ENCODE measurements at regions of chr7 and their contacts with region 1.

Region 1: DNA sequence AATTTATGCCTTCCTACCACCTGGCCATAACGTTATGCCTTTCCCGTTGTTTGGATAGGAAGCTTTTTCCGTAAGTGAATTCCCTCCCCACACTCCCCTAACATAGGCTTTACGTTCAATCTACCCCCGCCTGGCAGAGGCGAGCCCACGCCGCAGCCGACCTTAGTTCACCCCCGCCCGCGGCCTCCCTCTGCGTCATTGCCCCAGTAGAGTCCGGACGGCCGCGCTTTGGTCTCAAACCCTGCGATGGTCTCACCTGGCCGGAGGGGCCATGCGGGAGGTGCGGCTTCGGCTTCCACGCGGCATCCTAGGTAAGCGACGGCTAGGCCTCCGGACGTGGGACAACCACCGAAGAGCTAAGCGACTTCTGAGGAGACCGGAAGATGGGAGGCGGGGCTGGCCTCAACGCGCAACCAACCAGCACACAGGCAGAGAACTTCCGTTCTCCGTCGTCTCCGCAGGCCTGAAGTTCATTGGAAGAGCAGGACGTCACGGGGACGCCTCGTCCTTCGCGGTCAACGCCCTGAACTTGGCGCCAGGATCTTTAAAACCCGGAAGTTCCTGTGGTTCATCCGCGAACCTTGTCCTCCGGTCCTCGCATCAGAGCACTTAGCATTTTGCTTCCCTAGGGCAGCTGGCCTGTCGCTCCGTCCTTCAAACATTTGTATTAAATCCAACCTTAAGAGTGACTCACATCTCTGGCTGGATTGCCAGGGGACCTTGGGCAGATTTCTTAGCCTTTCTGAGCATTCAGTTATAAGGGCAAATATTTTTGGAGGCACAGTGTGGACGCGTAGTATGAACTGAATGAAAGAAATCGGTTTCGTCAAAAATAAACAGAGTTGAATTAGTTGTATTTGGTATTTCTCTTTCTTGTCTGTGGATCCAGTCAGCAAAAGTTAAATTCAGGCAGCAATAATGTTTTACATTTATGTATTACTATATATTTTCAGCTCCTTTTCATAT is at the start of gene CHCHD2:
- DNase-seq: peak; percentile 75 to 96 (median 93)
- ATAC-seq: peak; percentile 99
- H3K4me3 ChIP-seq: peak within 1 kb of the TSS; percentile 72
- H3K4me3 Mint-ChIP-seq: peak within 1 kb of the TSS; percentile 94 to 100 (median 96)
- H3K27ac ChIP-seq: peak within 1 kb of the TSS; percentile 95
- H3K27ac Mint-ChIP-seq: peak within 1 kb of the TSS; percentile 97 to 99 (median 98)
- H3K4me1 ChIP-seq: peaks cover 18 to 20% of the 10 kb centered on the region in 2 donors
- H3K4me1 Mint-ChIP-seq: peaks cover 19 to 43% (median 33%) of the 10 kb centered on the region in 7 donors
- H3K27me3 ChIP-seq: no peaks in the 10 kb centered on the region
- H3K27me3 Mint-ChIP-seq: no peaks in the 10 kb centered on the region
- total RNA-seq, gene CHCHD2: 133 to 451 (median 179) TPM

Region 2: DNA sequence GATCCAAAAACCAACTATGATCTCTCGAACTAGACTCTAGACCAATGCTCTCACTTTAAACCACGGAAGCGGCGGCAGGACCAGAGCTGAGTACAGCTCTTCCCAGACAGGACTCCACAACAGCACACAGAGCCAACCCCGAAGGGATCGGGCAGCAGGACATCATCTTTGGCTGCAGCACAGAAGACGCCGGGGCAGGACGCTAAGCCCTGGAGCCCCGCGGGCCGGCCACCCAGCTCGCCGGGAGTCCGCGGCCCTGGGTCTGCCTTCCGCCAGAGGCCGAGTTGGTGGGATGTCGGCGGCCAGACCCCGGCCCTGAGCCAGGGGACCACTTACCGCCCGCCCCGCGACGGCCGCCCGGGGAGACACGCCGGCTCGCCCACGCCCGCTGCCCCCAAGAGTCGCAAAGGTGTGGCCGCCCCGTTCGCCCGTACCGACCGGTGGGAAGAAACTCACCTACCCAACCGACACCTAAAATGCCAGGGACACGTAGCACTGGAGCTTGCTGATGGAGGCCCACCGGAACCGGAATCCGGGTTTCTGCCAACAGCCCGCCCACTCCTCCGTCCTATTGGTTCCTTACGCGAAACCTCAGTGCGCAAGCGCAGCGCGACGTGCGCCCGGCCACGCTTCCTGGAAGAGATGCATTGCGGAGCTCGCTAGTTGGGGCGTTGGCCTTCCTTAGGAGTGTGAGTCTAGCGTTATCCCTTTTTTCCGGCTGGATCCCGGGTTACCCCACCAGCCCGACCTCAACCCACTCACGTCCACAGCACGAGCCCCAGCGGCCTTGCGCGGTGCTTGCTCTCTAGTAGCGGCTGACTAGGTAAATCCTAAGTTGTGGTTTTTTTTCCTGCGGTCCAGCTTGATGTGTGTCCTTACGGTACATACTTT is 1347.4 kb before region 1 on chr7 and contains the start of gene SEC61G:
- CTCF ChIA-PET with region 1: no interaction called
- POLR2A ChIA-PET with region 1: interaction called, 3 read pairs
- intact Hi-C with region 1: loop called (anchors 1 kb)
- DNase-seq: peak; percentile 92 to 96 (median 94)
- ATAC-seq: peak; percentile 98
- H3K4me3 ChIP-seq: peak within 1 kb of the TSS; percentile 67
- H3K4me3 Mint-ChIP-seq: peak within 1 kb of the TSS; percentile 94 to 100 (median 100)
- H3K27ac ChIP-seq: peak within 1 kb of the TSS; percentile 83
- H3K27ac Mint-ChIP-seq: peak within 1 kb of the TSS; percentile 93 to 98 (median 96)
- H3K4me1 ChIP-seq: peaks cover 7 to 11% of the 10 kb centered on the region in 2 donors
- H3K4me1 Mint-ChIP-seq: peaks cover 15 to 54% (median 40%) of the 10 kb centered on the region in 7 donors
- H3K27me3 ChIP-seq: no peaks in the 10 kb centered on the region
- H3K27me3 Mint-ChIP-seq: peaks cover 0 to 21% (median 5%) of the 10 kb centered on the region in 5 donors
- total RNA-seq, gene SEC61G: 31.8 to 174 (median 46.6) TPM

Region 3: GRCh38 chr7:55951637-55952351 is 154.6 kb before region 1 on chr7 and contains the start of gene MRPS17:
- CTCF ChIA-PET with region 1: no interaction called
- POLR2A ChIA-PET with region 1: no interaction called
- intact Hi-C with region 1: loop called (anchors 1 kb)
- DNase-seq: peak; percentile 86 to 96 (median 94)
- ATAC-seq: peak; percentile 100
- H3K4me3 ChIP-seq: peak within 1 kb of the TSS; percentile 68
- H3K4me3 Mint-ChIP-seq: peak within 1 kb of the TSS; percentile 84 to 99 (median 96)
- H3K27ac ChIP-seq: peak within 1 kb of the TSS; percentile 86
- H3K27ac Mint-ChIP-seq: peak within 1 kb of the TSS; percentile 92 to 98 (median 96)
- H3K4me1 ChIP-seq: peaks cover 0 to 4% of the 10 kb centered on the region in 2 donors
- H3K4me1 Mint-ChIP-seq: peaks cover 10 to 33% (median 24%) of the 10 kb centered on the region in 7 donors
- H3K27me3 ChIP-seq: no peaks in the 10 kb centered on the region
- H3K27me3 Mint-ChIP-seq: peaks cover 0 to 2% (median 0%) of the 10 kb centered on the region in 5 donors
- total RNA-seq, gene MRPS17: 8.3 to 16.7 (median 12.0) TPM

Region 4: DNA sequence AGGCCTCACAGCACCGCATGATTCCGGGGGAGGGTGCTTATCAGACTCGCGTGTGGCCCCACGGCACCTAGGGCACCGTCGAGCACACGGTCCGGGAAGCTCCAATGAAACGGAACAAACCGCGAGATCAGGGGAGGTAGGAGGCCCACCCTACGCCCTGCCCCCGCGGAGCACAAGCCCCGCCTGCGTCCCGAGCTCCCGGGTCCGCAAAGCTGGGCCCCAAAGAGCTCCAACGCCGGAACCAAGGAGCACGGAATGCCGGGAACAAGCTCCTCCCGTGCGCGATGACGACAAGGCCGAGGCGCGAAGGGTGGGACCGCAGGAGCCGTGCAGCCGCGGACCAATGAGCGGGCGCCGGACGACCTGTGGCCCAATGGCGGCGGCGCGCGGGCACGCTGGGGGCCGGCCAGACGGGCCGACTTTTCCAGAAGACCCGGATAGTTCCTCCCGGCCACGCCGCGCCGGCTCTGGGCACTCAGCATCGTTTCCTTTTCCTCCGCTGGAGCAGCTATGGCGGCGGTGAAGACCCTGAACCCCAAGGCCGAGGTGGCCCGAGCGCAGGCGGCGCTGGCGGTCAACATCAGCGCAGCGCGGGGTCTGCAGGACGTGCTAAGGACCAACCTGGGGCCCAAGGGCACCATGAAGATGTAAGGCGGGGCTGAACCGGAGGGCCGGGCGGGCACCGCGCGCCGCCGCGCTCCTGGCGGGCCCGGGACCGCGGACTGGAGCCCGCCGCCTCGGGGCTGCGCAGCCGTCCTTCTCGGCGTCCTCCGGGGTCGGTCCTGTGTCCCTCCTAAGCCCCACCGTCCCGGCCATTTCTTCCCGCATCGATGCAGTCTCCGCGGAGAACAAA is 54.8 kb before region 1 on chr7 and contains the starts of genes CCT6A and PSPH:
- CTCF ChIA-PET with region 1: no interaction called
- POLR2A ChIA-PET with region 1: interaction called, 8 read pairs
- intact Hi-C with region 1: loop called (anchors 1 kb)
- DNase-seq: peak; percentile 74 to 93 (median 78)
- ATAC-seq: peak; percentile 95
- H3K4me3 ChIP-seq: peak within 1 kb of the TSS; percentile 88
- H3K4me3 Mint-ChIP-seq: peak within 1 kb of the TSS; percentile 91 to 99 (median 96)
- H3K27ac ChIP-seq: peak within 1 kb of the TSS; percentile 91
- H3K27ac Mint-ChIP-seq: peak within 1 kb of the TSS; percentile 78 to 96 (median 93)
- H3K4me1 ChIP-seq: peaks cover 6 to 9% of the 10 kb centered on the region in 2 donors
- H3K4me1 Mint-ChIP-seq: peaks cover 26 to 59% (median 45%) of the 10 kb centered on the region in 7 donors
- H3K27me3 ChIP-seq: no peaks in the 10 kb centered on the region
- H3K27me3 Mint-ChIP-seq: no peaks in the 10 kb centered on the region
- total RNA-seq, gene CCT6A: 38.7 to 143 (median 58.6) TPM
- total RNA-seq, gene PSPH: 3.5 to 10.4 (median 6.5) TPM

Region 5: DNA sequence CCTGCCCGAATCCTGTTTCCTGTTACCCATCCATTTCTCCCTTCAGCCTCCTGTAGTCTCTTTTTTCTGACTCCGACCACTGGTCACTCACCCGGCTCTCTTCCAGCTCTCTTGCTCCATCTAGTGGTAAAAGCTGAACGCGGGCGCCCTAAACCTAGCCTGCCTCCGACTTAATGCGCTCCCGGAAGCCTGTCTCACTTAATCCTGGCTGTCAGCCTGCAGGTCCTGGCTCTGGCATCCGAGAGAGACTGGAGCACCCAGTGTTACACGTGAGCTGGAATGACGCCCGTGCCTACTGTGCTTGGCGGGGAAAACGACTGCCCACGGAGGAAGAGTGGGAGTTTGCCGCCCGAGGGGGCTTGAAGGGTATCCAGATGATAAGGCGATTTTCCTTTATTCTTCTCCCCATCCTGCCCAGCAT is 32.0 kb before region 1 on chr7:
- CTCF ChIA-PET with region 1: no interaction called
- POLR2A ChIA-PET with region 1: no interaction called
- intact Hi-C with region 1: loop called in 1 of 2 experiments (anchors 2 kb)
- DNase-seq: peak; percentile 34 to 71 (median 52)
- ATAC-seq: peak; percentile 92
- H3K4me3 ChIP-seq: no peak overlapping the region
- H3K4me3 Mint-ChIP-seq: no peak overlapping the region
- H3K27ac ChIP-seq: no peak overlapping the region
- H3K27ac Mint-ChIP-seq: peak overlapping the region in 5 of 9 donors; percentile 41 to 89 (median 63)
- H3K4me1 ChIP-seq: no peaks in the 10 kb centered on the region
- H3K4me1 Mint-ChIP-seq: peaks cover 2 to 10% (median 6%) of the 10 kb centered on the region in 7 donors
- H3K27me3 ChIP-seq: no peaks in the 10 kb centered on the region
- H3K27me3 Mint-ChIP-seq: no peaks in the 10 kb centered on the region